PC-9 (cell line): ENCODE measurements at regions of chr7 and their contacts with region 1.

Region 1: DNA sequence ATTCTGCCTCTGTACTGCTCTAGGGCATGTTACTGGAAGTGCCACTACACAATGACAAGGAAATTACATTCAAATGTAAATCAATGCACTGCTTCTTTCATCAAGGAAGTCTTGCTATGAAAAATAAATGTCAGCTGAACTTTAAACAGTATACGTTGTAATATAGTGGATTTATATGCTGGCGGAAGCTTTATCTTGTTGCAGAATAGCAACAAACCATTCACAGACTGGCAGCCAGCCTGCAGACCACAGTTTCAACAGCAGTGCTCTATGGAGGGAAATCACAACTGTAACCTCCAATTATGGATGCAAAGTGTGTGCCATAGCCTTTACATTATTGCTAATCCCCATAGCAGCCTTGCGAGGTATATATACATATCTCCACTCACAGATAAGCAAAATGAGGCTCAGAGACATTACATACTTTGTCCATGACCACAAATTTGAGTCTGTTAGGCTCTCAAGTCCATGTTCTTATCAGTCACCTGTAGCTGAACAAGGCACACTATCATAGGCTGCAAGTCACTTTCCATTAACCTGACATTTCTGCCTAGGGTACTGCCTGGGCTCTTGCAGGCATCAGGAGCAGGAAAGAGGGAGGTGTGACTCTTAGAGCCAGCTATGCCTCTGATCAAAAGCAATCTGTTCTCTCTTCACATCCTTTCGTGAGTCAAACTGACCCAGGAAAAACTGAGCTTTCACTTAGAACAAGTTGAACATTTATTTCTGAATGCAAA is 22.6 kb downstream of the COL28A1 start:
- DNase-seq: no peak
- H3K4me3 ChIP-seq: no peak overlapping the region
- H3K27ac ChIP-seq: no peak overlapping the region
- H3K4me1 ChIP-seq: no peaks in the 10 kb centered on the region
- H3K27me3 ChIP-seq: no peaks in the 10 kb centered on the region
- CTCF ChIP-seq: no peak

Region 2: DNA sequence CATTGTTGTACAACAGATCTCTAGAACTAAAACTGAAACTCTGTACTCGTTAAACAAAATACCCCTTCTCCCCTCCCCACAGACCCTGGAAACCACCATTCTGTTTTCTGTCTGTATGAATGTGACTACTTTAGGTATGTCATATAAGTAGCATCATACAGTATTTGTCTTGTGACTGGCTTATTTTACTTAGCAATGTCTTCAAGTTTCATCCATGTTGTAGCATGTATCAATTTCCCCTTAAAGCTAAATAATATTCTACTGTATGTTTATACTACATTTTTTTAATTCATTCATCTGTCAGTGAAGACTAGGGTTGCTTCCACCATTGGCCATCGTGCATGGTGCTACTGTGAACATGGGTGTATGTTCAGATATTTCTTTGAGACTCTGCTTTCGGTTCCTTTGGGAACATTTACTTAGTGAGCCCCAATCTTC is 276.5 kb after region 1 on chr7:
- CTCF ChIA-PET with region 1: interaction called, 12 read pairs
- POLR2A ChIA-PET with region 1: no interaction called
- intact Hi-C with region 1: no loop called
- DNase-seq: no peak
- H3K4me3 ChIP-seq: no peak overlapping the region
- H3K27ac ChIP-seq: no peak overlapping the region
- H3K4me1 ChIP-seq: peaks cover 2% of the 10 kb centered on the region; the same call in 1 of the 2 replicates
- H3K27me3 ChIP-seq: no peaks in the 10 kb centered on the region
- CTCF ChIP-seq: no peak